ENCODE measurements at regions of chr15 and their contacts with region 1.

Region 1: DNA sequence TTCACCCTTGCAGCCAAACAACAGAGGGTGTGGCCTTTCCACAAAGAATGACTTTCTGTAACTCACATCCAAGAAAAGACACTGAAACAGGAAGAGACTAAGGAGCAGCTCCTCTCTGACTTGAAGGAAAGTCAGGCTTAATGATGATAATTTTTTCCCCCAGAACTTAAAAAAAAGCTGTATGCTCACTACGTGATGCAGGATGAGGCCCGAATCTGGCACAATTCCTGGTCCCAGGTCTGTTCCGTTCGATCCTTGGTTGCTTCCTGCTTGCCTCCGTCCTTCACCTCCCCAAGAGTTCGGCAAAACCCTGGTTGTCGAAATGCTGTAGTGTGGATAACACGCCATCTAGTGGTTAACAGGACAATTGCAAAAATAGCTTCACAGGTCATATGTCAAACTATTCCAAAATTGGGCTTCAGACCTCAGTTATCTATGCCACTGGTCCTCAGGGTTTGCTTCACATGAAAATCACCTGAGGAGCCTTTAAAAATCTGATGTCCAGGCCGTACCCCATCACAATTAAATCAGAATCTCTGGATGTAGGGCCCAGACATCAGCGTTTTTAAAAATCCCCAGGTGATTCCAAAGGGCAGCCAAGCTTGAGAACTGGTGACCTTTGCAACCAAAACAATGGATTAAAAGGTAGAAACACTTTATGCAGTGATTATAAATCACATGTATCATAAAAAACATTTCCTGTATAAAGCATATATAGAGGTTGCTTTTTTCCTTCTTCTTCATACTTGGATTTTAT is 28.1 kb upstream of the SYNM start:
- DNase-seq: peak; percentile 50
- ATAC-seq: peak; percentile 94
- H3K4me3 Mint-ChIP-seq: peak overlapping the region; percentile 53
- H3K27ac Mint-ChIP-seq: no peak overlapping the region
- H3K4me1 Mint-ChIP-seq: peaks cover 13% of the 10 kb centered on the region
- H3K27me3 Mint-ChIP-seq: no peaks in the 10 kb centered on the region
- CTCF ChIP-seq: peak; percentile 86

Region 2: DNA sequence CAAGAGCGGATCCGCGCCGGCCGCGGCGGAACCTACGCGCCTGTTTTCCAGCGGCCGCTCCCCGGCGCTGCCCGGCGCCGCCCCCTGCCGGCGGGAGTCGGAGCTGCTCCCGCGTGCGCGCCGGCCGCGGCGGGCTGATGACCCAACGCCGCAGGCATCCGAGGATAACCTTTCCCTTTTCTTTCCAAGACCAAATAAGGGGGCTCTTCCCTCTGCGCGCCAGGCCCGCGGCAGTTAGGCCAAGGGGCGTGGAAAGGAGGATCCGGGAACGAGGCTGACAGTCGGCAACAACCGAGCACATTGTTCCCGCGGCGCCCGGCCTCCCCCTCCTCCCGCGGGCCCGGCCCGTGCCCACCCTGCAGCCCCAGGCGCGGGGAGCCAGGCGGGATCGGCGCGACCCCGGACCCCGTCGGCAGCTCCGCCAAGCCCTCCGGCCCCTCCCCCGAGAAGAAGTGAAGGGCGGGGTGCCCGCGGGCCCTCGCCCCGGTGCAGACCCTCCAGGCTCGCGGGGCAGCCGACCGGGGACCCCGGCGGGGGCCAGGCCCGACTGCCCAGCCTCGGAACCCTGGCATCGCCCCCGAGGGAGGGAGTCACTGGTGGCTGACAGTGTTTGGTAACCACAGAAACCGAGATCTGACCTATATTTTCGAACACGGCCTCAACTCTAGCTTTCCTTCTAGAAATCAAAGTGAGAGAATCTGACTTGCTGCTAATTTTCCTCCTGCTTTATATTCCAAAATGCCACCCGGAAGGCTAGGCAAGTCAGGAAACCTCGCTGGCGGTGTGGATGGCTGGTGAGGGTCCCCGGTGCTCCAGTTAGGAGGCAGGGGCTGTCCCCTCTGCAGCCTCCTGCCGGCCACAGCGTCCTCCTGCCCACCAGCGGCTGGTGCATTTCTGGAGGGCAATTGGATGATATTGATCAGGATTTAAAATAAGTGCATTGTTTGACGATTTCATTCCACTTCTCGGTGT is 17.4 kb before region 1 on chr15:
- CTCF ChIA-PET with region 1: interaction called, 12 read pairs
- POLR2A ChIA-PET with region 1: interaction called, 3 read pairs
- DNase-seq: peak; percentile 76
- ATAC-seq: peak; percentile 89
- H3K4me3 Mint-ChIP-seq: peak overlapping the region; percentile 83
- H3K27ac Mint-ChIP-seq: no peak overlapping the region
- H3K4me1 Mint-ChIP-seq: peaks cover 3% of the 10 kb centered on the region; the same call in 1 of the 2 replicates
- H3K27me3 Mint-ChIP-seq: peaks cover 31% of the 10 kb centered on the region
- CTCF ChIP-seq: peak; percentile 61

Measured in WTC11 (cell line).